ENCODE measurements at regions of chr14 and their contacts with region 1.

Region 1: DNA sequence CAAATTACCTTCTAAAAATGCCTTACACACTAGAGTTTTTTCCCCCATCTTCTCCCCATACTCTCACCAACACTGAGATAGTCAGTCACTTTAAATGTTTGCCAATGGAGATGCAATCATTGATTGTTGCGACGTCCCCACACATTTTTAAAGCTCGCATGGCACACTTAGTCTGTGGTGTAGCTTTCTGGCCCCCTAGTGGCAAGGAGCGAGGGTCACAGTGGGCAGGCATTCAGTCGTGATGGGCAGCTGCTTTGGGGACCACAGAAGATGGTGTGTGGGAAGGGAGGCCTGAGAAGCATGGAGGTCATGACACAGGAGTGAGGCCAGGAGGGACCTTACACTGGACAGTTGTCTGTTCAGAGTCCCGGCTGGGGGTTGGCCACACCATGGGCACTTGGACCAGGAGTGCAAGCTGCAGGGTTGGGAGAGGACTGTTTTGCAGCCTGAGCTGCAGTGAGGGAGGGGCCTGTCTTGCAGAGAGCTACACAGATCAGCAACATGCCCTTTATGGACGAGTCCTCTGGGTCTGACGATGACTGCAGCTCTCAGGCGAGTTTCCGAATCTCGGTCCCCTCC is 28.7 kb downstream of the PIGH start:
- DNase-seq: peak; percentile 80
- ATAC-seq: peak; percentile 89
- H3K4me3 ChIP-seq: no peak overlapping the region
- H3K4me3 Mint-ChIP-seq: no peak overlapping the region
- H3K27ac ChIP-seq: no peak overlapping the region
- H3K27ac Mint-ChIP-seq: peak overlapping the region; percentile 1
- H3K4me1 ChIP-seq: no peaks in the 10 kb centered on the region
- H3K4me1 Mint-ChIP-seq: no peaks in the 10 kb centered on the region
- H3K27me3 ChIP-seq: no peaks in the 10 kb centered on the region
- H3K27me3 Mint-ChIP-seq: peaks cover 5% of the 10 kb centered on the region
- CTCF ChIP-seq: peak; percentile 83

Region 2: GRCh38 chr14:67311905-67312304 is 259.5 kb before region 1 on chr14:
- CTCF ChIA-PET with region 1: no interaction called
- POLR2A ChIA-PET with region 1: no interaction called
- intact Hi-C with region 1: no loop called
- DNase-seq: no peak
- ATAC-seq: no peak
- H3K4me3 ChIP-seq: no peak overlapping the region
- H3K4me3 Mint-ChIP-seq: no peak overlapping the region
- H3K27ac ChIP-seq: no peak overlapping the region
- H3K27ac Mint-ChIP-seq: no peak overlapping the region
- H3K4me1 ChIP-seq: no peaks in the 10 kb centered on the region
- H3K4me1 Mint-ChIP-seq: peaks cover 6% of the 10 kb centered on the region
- H3K27me3 ChIP-seq: no peaks in the 10 kb centered on the region
- H3K27me3 Mint-ChIP-seq: no peaks in the 10 kb centered on the region
- CTCF ChIP-seq: no peak

Region 3: GRCh38 chr14:67426983-67427606 is 144.3 kb before region 1 on chr14:
- CTCF ChIA-PET with region 1: interaction called, 863 read pairs
- POLR2A ChIA-PET with region 1: interaction called, 4 read pairs
- intact Hi-C with region 1: no loop called
- DNase-seq: peak; percentile 85
- ATAC-seq: peak; percentile 90
- H3K4me3 ChIP-seq: no peak overlapping the region
- H3K4me3 Mint-ChIP-seq: no peak overlapping the region
- H3K27ac ChIP-seq: no peak overlapping the region
- H3K27ac Mint-ChIP-seq: no peak overlapping the region
- H3K4me1 ChIP-seq: peaks cover 0 to 4% of the 10 kb centered on the region in 2 donors
- H3K4me1 Mint-ChIP-seq: peaks cover 3% of the 10 kb centered on the region
- H3K27me3 ChIP-seq: peaks cover 0 to 25% (median 1%) of the 10 kb centered on the region in 4 experiments
- H3K27me3 Mint-ChIP-seq: peaks cover 20% of the 10 kb centered on the region
- CTCF ChIP-seq: peak; percentile 88

Region 4: DNA sequence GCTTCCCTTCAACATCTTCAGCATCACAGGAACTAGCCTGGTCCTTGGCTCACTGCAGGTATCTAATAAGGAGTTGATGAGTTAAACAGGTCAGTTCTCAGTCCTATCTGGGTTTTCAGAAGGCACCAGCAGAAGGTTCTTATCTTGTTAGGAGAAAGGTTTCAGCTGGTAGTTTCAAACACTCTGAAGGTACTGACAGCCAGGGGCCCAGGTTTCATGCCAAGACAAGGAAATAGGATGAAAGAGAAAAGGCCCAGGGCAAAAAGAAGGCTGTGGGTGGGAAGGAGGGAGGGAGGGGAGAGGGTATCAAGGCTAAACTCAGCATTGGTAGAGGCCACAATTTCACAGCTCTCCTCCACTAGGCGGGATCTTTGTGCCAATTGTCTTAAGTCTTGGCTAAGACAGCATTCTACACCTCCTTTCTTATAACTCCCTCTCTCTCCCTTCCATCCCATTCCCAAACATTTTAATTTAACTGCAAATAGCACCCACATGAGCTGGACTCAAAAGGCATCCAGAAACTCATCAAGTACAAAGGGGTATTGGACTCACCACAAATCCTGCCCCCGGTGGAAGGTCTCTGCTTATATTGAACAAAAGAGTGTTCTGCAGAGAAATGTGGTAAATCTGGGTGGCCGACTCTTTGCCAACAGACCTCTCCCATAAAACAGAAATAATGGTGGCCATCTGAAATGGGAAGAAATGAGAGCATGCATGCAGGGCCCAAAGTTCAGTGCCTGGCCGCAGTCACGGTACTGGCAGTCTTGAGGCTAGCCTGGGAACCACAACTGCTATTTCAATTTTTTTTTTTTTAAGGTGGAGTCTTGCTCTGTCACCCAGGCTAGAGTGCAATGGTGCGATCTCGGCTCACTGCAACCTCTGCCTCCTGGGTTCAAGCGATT is 103.9 kb before region 1 on chr14:
- CTCF ChIA-PET with region 1: interaction called, 14 read pairs
- POLR2A ChIA-PET with region 1: no interaction called
- intact Hi-C with region 1: no loop called
- DNase-seq: no peak
- ATAC-seq: no peak
- H3K4me3 ChIP-seq: no peak overlapping the region
- H3K4me3 Mint-ChIP-seq: no peak overlapping the region
- H3K27ac ChIP-seq: no peak overlapping the region
- H3K27ac Mint-ChIP-seq: no peak overlapping the region
- H3K4me1 ChIP-seq: no peaks in the 10 kb centered on the region
- H3K4me1 Mint-ChIP-seq: peaks cover 4% of the 10 kb centered on the region
- H3K27me3 ChIP-seq: no peaks in the 10 kb centered on the region
- H3K27me3 Mint-ChIP-seq: no peaks in the 10 kb centered on the region
- CTCF ChIP-seq: peak; percentile 13

Region 5: GRCh38 chr14:67514650-67515385 is 56.5 kb before region 1 on chr14:
- CTCF ChIA-PET with region 1: interaction called, 14 read pairs
- POLR2A ChIA-PET with region 1: no interaction called
- intact Hi-C with region 1: no loop called
- DNase-seq: peak; percentile 66
- ATAC-seq: peak; percentile 50
- H3K4me3 ChIP-seq: peak overlapping the region; percentile 15 to 89 (median 80)
- H3K4me3 Mint-ChIP-seq: peak overlapping the region; percentile 93
- H3K27ac ChIP-seq: peak overlapping the region; percentile 65 to 73
- H3K27ac Mint-ChIP-seq: peak overlapping the region; percentile 93
- H3K4me1 ChIP-seq: peaks cover 37 to 38% of the 10 kb centered on the region in 2 donors
- H3K4me1 Mint-ChIP-seq: peaks cover 40% of the 10 kb centered on the region
- H3K27me3 ChIP-seq: no peaks in the 10 kb centered on the region
- H3K27me3 Mint-ChIP-seq: no peaks in the 10 kb centered on the region
- CTCF ChIP-seq: no peak

Region 6: DNA sequence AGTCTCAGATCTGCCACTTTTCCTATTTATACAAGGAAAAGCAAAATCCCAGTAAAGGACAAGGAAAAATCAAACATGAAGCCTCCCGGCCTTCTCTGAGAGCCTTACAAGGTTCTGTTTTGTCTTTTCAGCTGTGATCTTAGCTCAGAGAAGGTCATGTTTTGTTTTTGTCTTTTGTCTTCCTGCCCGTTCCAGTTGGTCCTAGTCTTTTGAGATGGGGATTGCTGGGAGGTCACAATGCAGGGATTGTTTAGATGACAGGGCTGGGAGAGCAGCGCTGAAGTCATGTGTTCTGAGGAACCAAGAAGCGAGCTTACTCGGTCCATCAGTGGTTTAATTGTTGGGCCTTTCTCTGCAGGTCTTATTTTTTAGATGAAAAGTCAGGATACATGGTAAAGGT is 32.2 kb before region 1 on chr14:
- CTCF ChIA-PET with region 1: interaction called, 14 read pairs
- POLR2A ChIA-PET with region 1: no interaction called
- intact Hi-C with region 1: no loop called
- DNase-seq: no peak
- ATAC-seq: no peak
- H3K4me3 ChIP-seq: no peak overlapping the region
- H3K4me3 Mint-ChIP-seq: no peak overlapping the region
- H3K27ac ChIP-seq: no peak overlapping the region
- H3K27ac Mint-ChIP-seq: no peak overlapping the region
- H3K4me1 ChIP-seq: peaks cover 10 to 18% of the 10 kb centered on the region in 2 donors
- H3K4me1 Mint-ChIP-seq: peaks cover 10% of the 10 kb centered on the region
- H3K27me3 ChIP-seq: peaks cover 0 to 43% (median 24%) of the 10 kb centered on the region in 4 experiments
- H3K27me3 Mint-ChIP-seq: peaks cover 43% of the 10 kb centered on the region
- CTCF ChIP-seq: no peak

Region 7: GRCh38 chr14:67666750-67667449 is 95.5 kb after region 1 on chr14:
- CTCF ChIA-PET with region 1: interaction called, 11 read pairs
- POLR2A ChIA-PET with region 1: no interaction called
- intact Hi-C with region 1: no loop called
- DNase-seq: peak; percentile 74
- ATAC-seq: peak; percentile 75
- H3K4me3 ChIP-seq: no peak overlapping the region
- H3K4me3 Mint-ChIP-seq: peak overlapping the region; percentile 60
- H3K27ac ChIP-seq: peak overlapping the region; percentile 45 to 74
- H3K27ac Mint-ChIP-seq: peak overlapping the region; percentile 78
- H3K4me1 ChIP-seq: peaks cover 22 to 23% of the 10 kb centered on the region in 2 donors
- H3K4me1 Mint-ChIP-seq: peaks cover 51% of the 10 kb centered on the region
- H3K27me3 ChIP-seq: no peaks in the 10 kb centered on the region
- H3K27me3 Mint-ChIP-seq: no peaks in the 10 kb centered on the region
- CTCF ChIP-seq: peak; percentile 80

Measured in B cell (primary cell).